B cell (primary cell): ENCODE measurements at regions of chr10 and their contacts with region 1.

Region 1: GRCh38 chr10:1420661-1421362 is 316.5 kb downstream of the ADARB2 start:
- DNase-seq: peak; percentile 90
- ATAC-seq: peak; percentile 78
- H3K4me3 ChIP-seq: peak overlapping the region in 3 of 5 experiments; percentile 23 to 42 (median 24)
- H3K4me3 Mint-ChIP-seq: peak overlapping the region; percentile 78
- H3K27ac ChIP-seq: peak overlapping the region in 1 of 2 donors; percentile 14
- H3K27ac Mint-ChIP-seq: peak overlapping the region; percentile 80
- H3K4me1 ChIP-seq: peaks cover 50 to 63% of the 10 kb centered on the region in 2 donors
- H3K4me1 Mint-ChIP-seq: peaks cover 60% of the 10 kb centered on the region
- H3K27me3 ChIP-seq: no peaks in the 10 kb centered on the region
- H3K27me3 Mint-ChIP-seq: peaks cover 4% of the 10 kb centered on the region
- CTCF ChIP-seq: peak; percentile 90

Region 2: GRCh38 chr10:1085258-1085657 is 335.6 kb before region 1 on chr10:
- CTCF ChIA-PET with region 1: no interaction called
- POLR2A ChIA-PET with region 1: no interaction called
- intact Hi-C with region 1: no loop called
- DNase-seq: no peak
- ATAC-seq: no peak
- H3K4me3 ChIP-seq: no peak overlapping the region
- H3K4me3 Mint-ChIP-seq: no peak overlapping the region
- H3K27ac ChIP-seq: no peak overlapping the region
- H3K27ac Mint-ChIP-seq: no peak overlapping the region
- H3K4me1 ChIP-seq: no peaks in the 10 kb centered on the region
- H3K4me1 Mint-ChIP-seq: no peaks in the 10 kb centered on the region
- H3K27me3 ChIP-seq: no peaks in the 10 kb centered on the region
- H3K27me3 Mint-ChIP-seq: no peaks in the 10 kb centered on the region
- CTCF ChIP-seq: no peak

Region 3: DNA sequence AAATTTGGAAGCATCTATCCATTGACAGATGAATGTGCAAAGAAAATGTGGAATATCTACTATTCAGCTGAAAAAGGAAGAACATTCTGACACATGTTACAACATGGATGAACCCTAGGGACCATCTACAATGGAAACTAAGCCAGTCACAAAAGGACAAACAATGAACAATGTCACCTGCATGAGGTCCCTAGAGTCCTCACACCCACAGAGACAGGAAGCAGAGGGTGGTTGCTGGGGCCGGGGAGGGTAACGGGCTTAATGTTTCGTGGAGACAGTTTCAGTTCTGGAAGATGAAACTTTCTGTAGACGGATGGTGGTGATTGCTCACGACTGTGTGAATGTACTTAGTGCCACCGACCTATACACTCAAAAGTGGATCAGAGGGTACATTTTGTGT is 33.6 kb after region 1 on chr10:
- CTCF ChIA-PET with region 1: interaction called, 5 read pairs
- POLR2A ChIA-PET with region 1: interaction called, 11 read pairs
- intact Hi-C with region 1: loop called (anchors 1 kb)
- DNase-seq: peak; percentile 87
- ATAC-seq: peak; percentile 95
- H3K4me3 ChIP-seq: peak overlapping the region in 3 of 5 experiments; percentile 13 to 44 (median 21)
- H3K4me3 Mint-ChIP-seq: peak overlapping the region; percentile 76
- H3K27ac ChIP-seq: peak overlapping the region; percentile 78 to 81
- H3K27ac Mint-ChIP-seq: peak overlapping the region; percentile 91
- H3K4me1 ChIP-seq: peaks cover 36 to 45% of the 10 kb centered on the region in 2 donors
- H3K4me1 Mint-ChIP-seq: peaks cover 66% of the 10 kb centered on the region
- H3K27me3 ChIP-seq: no peaks in the 10 kb centered on the region
- H3K27me3 Mint-ChIP-seq: no peaks in the 10 kb centered on the region
- CTCF ChIP-seq: no peak

Region 4: DNA sequence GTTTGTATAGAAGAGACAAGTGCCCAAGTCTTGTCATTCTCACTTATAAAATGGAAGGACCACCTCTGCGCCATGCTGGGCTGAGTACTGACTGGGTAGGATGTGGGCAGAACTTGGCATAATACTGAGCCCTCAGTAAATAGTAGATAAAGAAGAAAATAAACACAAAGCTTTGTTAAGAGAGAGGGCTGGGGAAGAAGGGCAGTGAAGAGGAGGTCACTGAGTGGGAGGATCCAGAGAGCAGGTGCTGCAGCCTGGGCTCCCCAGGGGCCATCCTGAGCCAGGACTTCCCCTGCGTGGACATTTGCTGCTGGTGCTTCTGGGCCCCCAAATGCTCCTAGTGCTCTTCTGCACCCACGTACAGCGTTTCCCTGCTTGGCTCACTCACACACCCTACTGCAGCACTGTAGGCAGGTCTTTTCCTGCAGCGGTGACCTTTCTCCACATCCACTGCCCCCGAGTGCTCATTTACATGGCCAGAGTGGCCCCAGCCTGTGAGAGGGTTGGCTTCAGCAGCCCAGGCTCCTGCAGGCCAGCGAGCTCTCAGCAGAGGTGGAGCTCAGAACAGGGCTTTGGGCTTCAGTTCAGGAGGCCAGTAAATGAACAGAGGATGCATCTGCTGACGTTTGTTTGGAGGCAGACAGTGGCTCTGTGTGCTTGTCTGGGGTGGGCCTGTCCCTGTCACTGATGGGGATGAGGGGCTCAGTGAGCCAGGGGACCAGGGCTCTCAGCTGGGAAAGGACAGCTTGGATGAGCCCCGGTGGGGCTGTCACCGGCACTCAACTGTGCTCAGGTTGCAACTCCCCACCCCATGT is 151.9 kb after region 1 on chr10:
- CTCF ChIA-PET with region 1: interaction called, 3 read pairs
- POLR2A ChIA-PET with region 1: interaction called, 3 read pairs
- intact Hi-C with region 1: loop called (anchors 1 kb)
- DNase-seq: no peak
- ATAC-seq: no peak
- H3K4me3 ChIP-seq: no peak overlapping the region
- H3K4me3 Mint-ChIP-seq: no peak overlapping the region
- H3K27ac ChIP-seq: no peak overlapping the region
- H3K27ac Mint-ChIP-seq: no peak overlapping the region
- H3K4me1 ChIP-seq: peaks cover 32% of the 10 kb centered on the region in 2 donors
- H3K4me1 Mint-ChIP-seq: peaks cover 41% of the 10 kb centered on the region
- H3K27me3 ChIP-seq: peaks cover 0 to 18% (median 2%) of the 10 kb centered on the region in 4 experiments
- H3K27me3 Mint-ChIP-seq: peaks cover 34% of the 10 kb centered on the region
- CTCF ChIP-seq: no peak

Region 5: GRCh38 chr10:1643161-1643907 is 222.5 kb after region 1 on chr10:
- CTCF ChIA-PET with region 1: interaction called, 3 read pairs
- POLR2A ChIA-PET with region 1: no interaction called
- intact Hi-C with region 1: loop called (anchors 1 kb)
- DNase-seq: no peak
- ATAC-seq: peak; percentile 73
- H3K4me3 ChIP-seq: no peak overlapping the region
- H3K4me3 Mint-ChIP-seq: no peak overlapping the region
- H3K27ac ChIP-seq: no peak overlapping the region
- H3K27ac Mint-ChIP-seq: no peak overlapping the region
- H3K4me1 ChIP-seq: peaks cover 6 to 7% of the 10 kb centered on the region in 2 donors
- H3K4me1 Mint-ChIP-seq: peaks cover 8% of the 10 kb centered on the region
- H3K27me3 ChIP-seq: peaks cover 0 to 20% (median 0%) of the 10 kb centered on the region in 4 experiments
- H3K27me3 Mint-ChIP-seq: peaks cover 35% of the 10 kb centered on the region
- CTCF ChIP-seq: no peak

Region 6: GRCh38 chr10:1661859-1662437 is 241.1 kb after region 1 on chr10:
- CTCF ChIA-PET with region 1: interaction called, 5 read pairs
- POLR2A ChIA-PET with region 1: interaction called, 7 read pairs
- intact Hi-C with region 1: loop called (anchors 1 kb)
- DNase-seq: peak; percentile 87
- ATAC-seq: peak; percentile 89
- H3K4me3 ChIP-seq: peak overlapping the region in 2 of 5 experiments; percentile 1 to 20
- H3K4me3 Mint-ChIP-seq: peak overlapping the region; percentile 79
- H3K27ac ChIP-seq: peak overlapping the region; percentile 68 to 71
- H3K27ac Mint-ChIP-seq: peak overlapping the region; percentile 75
- H3K4me1 ChIP-seq: peaks cover 31 to 32% of the 10 kb centered on the region in 2 donors
- H3K4me1 Mint-ChIP-seq: peaks cover 50% of the 10 kb centered on the region
- H3K27me3 ChIP-seq: peaks cover 0 to 5% (median 2%) of the 10 kb centered on the region in 4 experiments
- H3K27me3 Mint-ChIP-seq: peaks cover 19% of the 10 kb centered on the region
- CTCF ChIP-seq: no peak

Region 7: DNA sequence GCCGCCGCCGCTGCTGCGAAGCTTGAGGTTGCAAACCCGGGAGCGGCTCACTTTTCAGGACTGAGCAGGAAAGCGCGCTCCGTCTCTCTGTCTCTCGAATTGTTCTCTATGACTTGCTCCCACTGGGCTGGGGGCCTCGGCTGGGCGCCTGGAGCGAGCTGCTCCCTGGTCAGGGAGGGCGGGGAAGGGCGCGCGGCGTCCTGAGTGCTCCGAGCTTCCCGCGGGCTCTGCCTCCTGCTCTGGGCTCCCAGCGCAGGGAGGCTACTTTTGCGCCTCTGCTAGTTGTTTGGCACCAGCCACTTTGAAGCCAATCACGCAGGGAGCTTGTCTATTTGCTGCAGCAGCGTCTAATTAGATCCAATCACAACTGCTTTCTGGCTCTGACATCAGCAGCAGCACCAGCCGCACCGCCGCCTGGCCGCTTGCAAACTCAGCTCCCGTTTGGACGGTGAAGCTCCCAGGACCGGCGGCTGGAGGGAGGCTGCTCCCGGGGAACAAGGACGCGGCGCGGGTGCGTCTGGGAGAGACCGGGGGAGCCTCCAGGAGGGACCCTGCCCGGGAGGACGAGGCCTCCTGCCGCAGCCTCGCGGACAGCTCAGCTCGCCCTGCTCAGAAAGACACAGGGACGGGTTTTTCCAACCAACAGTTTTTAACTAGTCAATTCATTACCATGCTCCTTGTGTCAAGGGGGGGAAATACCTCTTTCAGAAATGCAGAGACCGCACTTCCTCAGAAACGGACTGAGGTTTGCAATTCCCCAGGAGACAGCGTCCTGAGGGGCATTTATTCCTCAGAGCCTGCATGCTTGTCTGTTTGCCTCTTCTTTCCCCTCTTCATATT is 316.6 kb after region 1 on chr10 and contains the start of gene ADARB2:
- CTCF ChIA-PET with region 1: interaction called, 14 read pairs
- POLR2A ChIA-PET with region 1: no interaction called
- intact Hi-C with region 1: loop called (anchors 2 kb)
- DNase-seq: peak; percentile 60
- ATAC-seq: peak; percentile 72
- H3K4me3 ChIP-seq: peak within 1 kb of the TSS; percentile 16 to 50 (median 42)
- H3K4me3 Mint-ChIP-seq: peak within 1 kb of the TSS; percentile 61
- H3K27ac ChIP-seq: no peak within 1 kb of the TSS
- H3K27ac Mint-ChIP-seq: no peak within 1 kb of the TSS
- H3K4me1 ChIP-seq: peaks cover 32 to 36% of the 10 kb centered on the region in 2 donors
- H3K4me1 Mint-ChIP-seq: peaks cover 33% of the 10 kb centered on the region
- H3K27me3 ChIP-seq: peaks cover 0 to 64% (median 53%) of the 10 kb centered on the region in 4 experiments
- H3K27me3 Mint-ChIP-seq: peaks cover 77% of the 10 kb centered on the region
- CTCF ChIP-seq: no peak
- total RNA-seq, gene ADARB2: 0.85 and 0.96 TPM in 2 replicates

Region 8: DNA sequence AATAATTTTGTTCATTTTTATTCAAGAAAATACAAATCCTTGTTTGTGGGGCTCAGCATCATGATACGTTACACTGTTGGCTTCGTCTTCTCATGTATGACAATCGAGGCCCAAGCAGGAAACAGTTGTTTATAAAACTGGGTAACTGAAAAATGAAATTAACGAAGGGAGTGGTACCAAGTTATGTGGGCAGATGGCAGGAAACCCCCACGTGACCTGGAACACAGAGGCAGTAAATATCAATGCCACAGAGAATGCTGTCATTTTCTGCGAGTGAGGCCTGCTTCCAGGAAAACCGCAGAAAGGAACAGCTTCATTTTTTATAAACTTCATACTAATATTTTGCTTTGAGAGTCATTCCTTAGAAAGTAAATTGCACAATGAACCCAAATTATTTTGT is 517.5 kb after region 1 on chr10:
- CTCF ChIA-PET with region 1: no interaction called
- POLR2A ChIA-PET with region 1: no interaction called
- intact Hi-C with region 1: loop called (anchors 10 kb)
- DNase-seq: peak; percentile 80
- ATAC-seq: peak; percentile 37
- H3K4me3 ChIP-seq: no peak overlapping the region
- H3K4me3 Mint-ChIP-seq: peak overlapping the region; percentile 79
- H3K27ac ChIP-seq: peak overlapping the region; percentile 89 to 91
- H3K27ac Mint-ChIP-seq: peak overlapping the region; percentile 27
- H3K4me1 ChIP-seq: peaks cover 32 to 39% of the 10 kb centered on the region in 2 donors
- H3K4me1 Mint-ChIP-seq: peaks cover 24% of the 10 kb centered on the region
- H3K27me3 ChIP-seq: no peaks in the 10 kb centered on the region
- H3K27me3 Mint-ChIP-seq: no peaks in the 10 kb centered on the region
- CTCF ChIP-seq: no peak